ENCODE measurements at regions of chr12 and their contacts with region 1.

Region 1: DNA sequence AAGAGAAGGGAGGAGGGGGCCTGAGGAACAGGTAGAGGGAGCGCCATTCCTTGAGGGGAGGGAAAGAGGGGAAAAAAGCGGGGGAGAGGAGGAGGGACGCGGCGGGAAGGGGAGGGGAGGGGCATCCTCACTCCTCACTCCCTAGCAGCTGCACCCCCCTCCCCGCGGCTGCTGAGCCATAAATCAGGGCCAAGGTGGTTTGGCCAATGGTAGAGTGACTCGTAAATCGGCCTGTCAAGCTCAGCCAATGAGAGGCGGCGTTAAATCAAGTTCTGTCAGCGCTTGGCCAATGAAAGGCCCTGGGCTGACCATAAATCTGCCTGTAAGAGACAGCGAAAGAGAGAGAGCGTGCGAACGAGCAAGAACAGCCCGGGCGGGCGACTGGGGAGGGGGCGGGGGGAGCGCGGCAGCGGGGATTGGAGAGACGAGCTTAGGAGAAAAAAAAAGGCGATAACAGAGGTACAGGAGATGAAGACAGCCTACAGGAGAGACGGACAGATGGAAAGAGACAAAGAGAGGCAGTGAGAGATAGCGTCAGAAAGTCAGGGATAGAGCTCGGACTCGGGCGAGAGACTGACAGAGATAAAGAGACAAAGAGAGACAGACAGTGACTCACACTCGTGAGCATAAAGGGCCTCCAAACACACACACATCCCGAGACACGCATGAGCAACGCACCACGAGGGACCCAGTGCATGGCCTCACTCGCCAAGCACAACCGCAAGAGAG is 5.1 kb downstream of the GPR84 start:
- DNase-seq: peak; percentile 77 to 98 (median 94)
- ATAC-seq: peak; percentile 95 to 96 (median 95)
- H3K4me3 ChIP-seq: peak overlapping the region; percentile 83 to 84
- H3K4me3 Mint-ChIP-seq: no peak overlapping the region
- H3K27ac ChIP-seq: peak overlapping the region; percentile 77
- H3K27ac Mint-ChIP-seq: no peak overlapping the region
- H3K4me1 ChIP-seq: peaks cover 16 to 30% of the 10 kb centered on the region in 2 experiments
- H3K4me1 Mint-ChIP-seq: peaks cover 10 to 21% (median 14%) of the 10 kb centered on the region in 3 donors
- H3K27me3 ChIP-seq: peaks cover 0 to 3% of the 10 kb centered on the region in 2 experiments
- H3K27me3 Mint-ChIP-seq: no peaks in the 10 kb centered on the region

Region 2: DNA sequence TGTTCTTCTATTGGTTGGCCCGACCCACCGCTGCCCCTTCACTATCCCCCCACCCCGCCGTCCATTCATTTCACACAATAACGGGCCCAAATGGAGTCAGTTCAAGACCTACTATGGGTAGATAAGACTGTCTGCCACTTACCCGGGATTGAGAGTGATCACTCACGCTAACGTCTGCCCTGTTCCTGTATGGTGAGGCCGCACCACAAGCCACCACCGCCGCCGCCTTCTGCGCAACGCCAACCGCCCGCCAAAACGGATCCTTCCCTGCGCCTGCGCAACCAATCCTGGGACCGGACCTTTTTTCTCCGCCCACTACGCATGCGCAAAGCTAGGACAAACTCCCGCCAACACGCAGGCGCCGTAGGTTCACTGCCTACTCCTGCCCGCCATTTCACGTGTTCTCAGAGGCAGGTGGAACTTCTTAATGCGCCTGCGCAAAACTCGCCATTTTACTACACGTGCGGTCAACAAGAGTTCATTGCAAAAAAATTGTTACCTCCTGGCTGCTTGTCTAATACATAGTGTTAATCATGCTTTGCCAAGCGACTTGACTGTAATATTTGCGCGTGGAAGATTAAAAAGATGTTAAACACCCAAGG is 79.2 kb before region 1 on chr12 and contains the start of gene CBX5:
- CTCF ChIA-PET with region 1: interaction called in 1 of 2 experiments, 8 read pairs
- POLR2A ChIA-PET with region 1: interaction called in 1 of 2 experiments, 16 read pairs
- DNase-seq: peak; percentile 98 to 100 (median 99)
- ATAC-seq: peak; percentile 55 to 59 (median 56)
- H3K4me3 ChIP-seq: peak within 1 kb of the TSS; percentile 78 to 87
- H3K4me3 Mint-ChIP-seq: no peak within 1 kb of the TSS
- H3K27ac ChIP-seq: peak within 1 kb of the TSS; percentile 98
- H3K27ac Mint-ChIP-seq: no peak within 1 kb of the TSS
- H3K4me1 ChIP-seq: peaks cover 35 to 48% of the 10 kb centered on the region in 2 experiments
- H3K4me1 Mint-ChIP-seq: peaks cover 19 to 51% (median 23%) of the 10 kb centered on the region in 3 donors
- H3K27me3 ChIP-seq: no peaks in the 10 kb centered on the region
- H3K27me3 Mint-ChIP-seq: no peaks in the 10 kb centered on the region
- total RNA-seq, gene CBX5: 43.8 to 54.5 (median 47.1) TPM

Measured in T-cell (primary cell).